Activated CD4-positive, alpha-beta T cell treated with anti-CD3 and anti-CD28 coated beads for 36 hours (primary cell): ENCODE measurements at regions of chr13 and their contacts with region 1.

Region 1: DNA sequence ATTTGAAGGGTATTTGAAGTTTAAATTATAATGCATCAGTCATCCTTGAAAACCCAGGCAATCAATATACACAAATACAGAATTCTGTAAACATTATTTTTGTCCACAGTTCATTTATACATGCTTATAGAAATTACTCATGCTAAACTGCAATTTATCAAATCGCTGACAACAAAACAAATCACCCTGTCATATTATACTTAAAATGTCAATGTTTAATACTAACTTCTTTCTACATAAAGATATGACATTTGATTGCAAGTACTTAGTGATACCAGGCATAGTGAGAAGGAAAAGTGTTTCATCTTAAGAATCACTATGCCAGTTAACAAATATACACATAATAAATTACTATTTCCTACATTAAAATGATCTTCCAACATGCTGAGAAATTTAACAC is 232.0 kb downstream of the PCDH20 start:
- DNase-seq: no peak
- ATAC-seq: no peak
- H3K4me3 Mint-ChIP-seq: no peak overlapping the region
- H3K27ac Mint-ChIP-seq: no peak overlapping the region
- H3K4me1 Mint-ChIP-seq: no peaks in the 10 kb centered on the region
- H3K27me3 Mint-ChIP-seq: no peaks in the 10 kb centered on the region

Region 2: DNA sequence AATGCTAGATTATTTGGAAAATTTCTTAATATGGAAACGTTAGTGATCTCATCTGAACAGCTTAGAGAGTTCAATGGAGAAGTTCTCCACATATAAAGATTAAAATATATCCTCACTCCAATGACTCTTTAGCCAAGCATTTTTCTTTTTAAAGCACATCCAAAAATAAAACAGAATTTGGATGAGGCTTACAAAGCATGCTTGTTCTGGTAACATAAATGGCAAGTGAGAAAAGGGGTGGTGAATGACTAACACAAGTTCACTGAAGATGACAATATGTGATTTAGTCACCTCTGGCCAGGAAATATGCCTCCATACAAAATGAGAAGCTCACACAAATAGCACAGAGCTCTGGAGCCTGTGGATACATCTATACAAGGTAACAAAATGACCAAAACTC is 21.0 kb before region 1 on chr13:
- CTCF ChIA-PET with region 1: no interaction called
- POLR2A ChIA-PET with region 1: no interaction called
- intact Hi-C with region 1: loop called in 1 of 2 experiments (anchors 2 kb)
- DNase-seq: no peak
- ATAC-seq: no peak
- H3K4me3 Mint-ChIP-seq: no peak overlapping the region
- H3K27ac Mint-ChIP-seq: no peak overlapping the region
- H3K4me1 Mint-ChIP-seq: no peaks in the 10 kb centered on the region
- H3K27me3 Mint-ChIP-seq: no peaks in the 10 kb centered on the region

Region 3: GRCh38 chr13:61432029-61432428 is 248.4 kb after region 1 on chr13:
- CTCF ChIA-PET with region 1: no interaction called
- POLR2A ChIA-PET with region 1: no interaction called
- intact Hi-C with region 1: no loop called
- DNase-seq: no peak
- ATAC-seq: no peak
- H3K4me3 Mint-ChIP-seq: no peak overlapping the region
- H3K27ac Mint-ChIP-seq: no peak overlapping the region
- H3K4me1 Mint-ChIP-seq: no peaks in the 10 kb centered on the region
- H3K27me3 Mint-ChIP-seq: no peaks in the 10 kb centered on the region

Region 4: GRCh38 chr13:61470786-61471185 is 287.1 kb after region 1 on chr13:
- CTCF ChIA-PET with region 1: no interaction called
- POLR2A ChIA-PET with region 1: no interaction called
- intact Hi-C with region 1: no loop called
- DNase-seq: no peak
- ATAC-seq: no peak
- H3K4me3 Mint-ChIP-seq: no peak overlapping the region
- H3K27ac Mint-ChIP-seq: no peak overlapping the region
- H3K4me1 Mint-ChIP-seq: no peaks in the 10 kb centered on the region
- H3K27me3 Mint-ChIP-seq: no peaks in the 10 kb centered on the region